Common myeloid progenitor, CD34-positive (primary cell): ENCODE measurements at regions of chr17 and their contacts with region 1.

Region 1: GRCh38 chr17:79839363-79840268 is at the start of gene CBX4:
- DNase-seq: peak; percentile 89 to 94 (median 93)
- H3K4me3 ChIP-seq: peak within 1 kb of the TSS; percentile 53 to 98 (median 87)
- H3K27ac ChIP-seq: peak within 1 kb of the TSS in 1 of 2 experiments; percentile 79
- H3K4me1 ChIP-seq: peaks cover 0 to 82% (median 77%) of the 10 kb centered on the region in 4 experiments
- H3K27me3 ChIP-seq: peaks cover 0 to 48% (median 25%) of the 10 kb centered on the region in 5 experiments

Region 2: DNA sequence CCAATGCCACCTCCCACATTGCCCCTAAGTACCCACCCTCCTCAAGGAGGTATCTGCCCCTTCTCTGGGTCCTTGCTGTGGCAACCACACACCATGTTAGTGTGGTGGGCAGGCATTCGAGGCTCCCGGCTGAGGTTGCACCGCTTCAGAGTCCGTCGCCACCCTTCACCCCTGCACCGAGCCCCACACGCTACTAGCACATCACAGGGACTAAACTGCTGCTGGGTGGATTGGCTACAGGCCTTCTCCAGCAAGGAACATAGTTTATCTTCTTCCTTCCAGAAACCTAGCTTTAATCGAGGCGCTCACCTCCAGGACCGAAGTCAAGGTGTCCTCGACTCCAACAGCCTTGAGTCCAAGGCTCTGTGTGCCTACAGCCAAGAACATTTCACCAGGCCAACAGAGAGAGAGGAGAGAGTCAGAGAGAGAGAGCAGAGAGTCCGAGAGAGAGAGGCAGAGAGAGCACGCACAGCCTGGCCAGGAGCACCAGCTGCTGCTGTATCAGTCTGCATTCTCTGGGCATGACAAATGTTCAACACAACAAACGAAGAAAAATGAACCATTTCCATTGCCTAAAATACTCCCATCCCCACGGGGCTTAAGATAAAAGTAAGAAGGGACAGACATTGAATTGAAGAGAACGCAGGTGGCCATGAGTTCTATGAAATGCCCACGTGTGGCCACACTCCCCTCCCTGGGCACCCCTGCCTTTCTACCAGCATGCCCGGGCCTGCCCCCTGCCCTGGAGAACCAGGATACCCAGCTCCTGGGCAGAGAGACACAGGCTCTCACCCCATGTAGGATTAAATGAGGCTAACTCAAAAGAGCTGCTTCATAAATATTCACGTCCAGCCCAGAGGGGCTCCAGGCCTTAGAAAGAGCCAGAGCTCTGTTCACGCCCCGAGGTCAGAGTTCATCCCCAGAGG is 323.7 kb before region 1 on chr17:
- CTCF ChIA-PET with region 1: no interaction called
- POLR2A ChIA-PET with region 1: no interaction called
- DNase-seq: no peak
- H3K4me3 ChIP-seq: no peak overlapping the region
- H3K27ac ChIP-seq: no peak overlapping the region
- H3K4me1 ChIP-seq: peaks cover 0 to 6% (median 3%) of the 10 kb centered on the region in 4 experiments
- H3K27me3 ChIP-seq: peaks cover 0 to 51% (median 10%) of the 10 kb centered on the region in 5 experiments

Region 3: GRCh38 chr17:79818026-79818758 is 21.4 kb before region 1 on chr17:
- CTCF ChIA-PET with region 1: interaction called, 36 read pairs
- POLR2A ChIA-PET with region 1: interaction called, 6 read pairs
- DNase-seq: no peak
- H3K4me3 ChIP-seq: no peak overlapping the region
- H3K27ac ChIP-seq: no peak overlapping the region
- H3K4me1 ChIP-seq: peaks cover 0 to 24% (median 22%) of the 10 kb centered on the region in 4 experiments
- H3K27me3 ChIP-seq: peaks cover 0 to 56% (median 28%) of the 10 kb centered on the region in 5 experiments

Region 4: GRCh38 chr17:79826204-79826680 is 13.4 kb before region 1 on chr17:
- CTCF ChIA-PET with region 1: interaction called, 11 read pairs
- POLR2A ChIA-PET with region 1: interaction called, 6 read pairs
- DNase-seq: peak in 1 of 3 donors; percentile 57
- H3K4me3 ChIP-seq: peak overlapping the region in 3 of 7 experiments; percentile 6 to 20 (median 6)
- H3K27ac ChIP-seq: peak overlapping the region in 1 of 2 experiments; percentile 47
- H3K4me1 ChIP-seq: peaks cover 9 to 66% (median 39%) of the 10 kb centered on the region in 4 experiments
- H3K27me3 ChIP-seq: no peaks in the 10 kb centered on the region